A549 (cell line): ENCODE measurements at regions of chr2 and their contacts with region 1.

Region 1: GRCh38 chr2:44479122-44479887 is 117.6 kb downstream of the CAMKMT start:
- DNase-seq: peak; percentile 74 to 91
- ATAC-seq: peak; percentile 99 to 100
- H3K4me3 ChIP-seq: no peak overlapping the region
- H3K27ac ChIP-seq: no peak overlapping the region
- H3K4me1 ChIP-seq: no peaks in the 10 kb centered on the region
- CTCF ChIP-seq: peak; percentile 100
- EP300 ChIP-seq: no peak
- POLR2A ChIP-seq: no peak
- RAD21 ChIP-seq: peak; percentile 98

Region 2: DNA sequence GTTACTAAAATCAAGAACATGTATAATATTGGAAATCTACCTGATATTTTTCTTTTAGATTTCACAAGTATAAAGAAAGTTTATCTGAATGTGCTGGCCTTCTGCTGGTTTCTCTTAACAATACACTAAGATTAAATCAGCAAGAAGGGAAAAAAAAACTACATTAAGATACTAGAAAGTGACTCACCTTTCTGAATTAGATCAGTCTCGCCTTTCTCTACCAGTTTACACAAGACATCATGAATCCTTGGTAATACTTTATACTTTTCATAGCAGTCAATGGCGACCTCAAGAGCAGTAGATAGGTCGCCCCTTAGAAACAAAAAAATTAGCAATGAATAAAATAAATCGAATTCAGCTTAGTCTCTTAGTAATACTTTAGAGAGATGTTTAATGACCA is 544.7 kb before region 1 on chr2:
- CTCF ChIA-PET with region 1: no interaction called
- POLR2A ChIA-PET with region 1: no interaction called
- DNase-seq: no peak
- ATAC-seq: no peak
- H3K4me3 ChIP-seq: no peak overlapping the region
- H3K27ac ChIP-seq: no peak overlapping the region
- H3K4me1 ChIP-seq: peaks cover 9% of the 10 kb centered on the region
- CTCF ChIP-seq: no peak
- EP300 ChIP-seq: no peak
- POLR2A ChIP-seq: no peak
- RAD21 ChIP-seq: no peak

Region 3: DNA sequence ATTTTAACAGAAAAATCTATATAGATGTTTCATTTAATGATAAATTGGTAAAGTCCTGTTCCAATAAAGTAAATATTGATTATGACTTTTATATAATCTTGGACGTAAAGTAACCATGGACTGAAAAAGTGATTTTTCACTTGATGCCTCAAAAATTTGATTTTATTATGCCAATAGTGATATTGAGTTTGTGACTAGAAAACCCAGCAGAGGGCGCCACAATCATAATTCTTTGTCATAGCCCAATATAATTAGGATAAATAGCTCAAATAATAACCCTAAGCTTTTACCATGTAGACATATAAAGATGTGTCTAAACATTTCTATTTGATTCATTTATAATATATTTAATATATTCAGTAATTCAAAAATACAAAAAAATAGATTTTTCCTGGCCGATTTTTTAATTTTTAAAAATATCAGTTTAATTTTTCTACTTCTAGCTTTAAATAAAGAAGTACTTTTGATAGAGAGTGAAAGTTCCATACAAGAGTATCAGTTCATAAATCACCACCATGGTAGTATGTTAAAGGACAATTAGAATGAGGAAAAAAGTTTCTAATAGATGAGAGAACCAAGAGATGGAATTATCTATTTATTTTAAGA is 86.9 kb before region 1 on chr2:
- CTCF ChIA-PET with region 1: interaction called, 102 read pairs
- POLR2A ChIA-PET with region 1: no interaction called
- DNase-seq: peak; percentile 21 to 35
- ATAC-seq: no peak
- H3K4me3 ChIP-seq: no peak overlapping the region
- H3K27ac ChIP-seq: no peak overlapping the region
- H3K4me1 ChIP-seq: no peaks in the 10 kb centered on the region
- CTCF ChIP-seq: peak; percentile 95
- EP300 ChIP-seq: no peak
- POLR2A ChIP-seq: no peak
- RAD21 ChIP-seq: peak; percentile 75 to 82

Region 4: DNA sequence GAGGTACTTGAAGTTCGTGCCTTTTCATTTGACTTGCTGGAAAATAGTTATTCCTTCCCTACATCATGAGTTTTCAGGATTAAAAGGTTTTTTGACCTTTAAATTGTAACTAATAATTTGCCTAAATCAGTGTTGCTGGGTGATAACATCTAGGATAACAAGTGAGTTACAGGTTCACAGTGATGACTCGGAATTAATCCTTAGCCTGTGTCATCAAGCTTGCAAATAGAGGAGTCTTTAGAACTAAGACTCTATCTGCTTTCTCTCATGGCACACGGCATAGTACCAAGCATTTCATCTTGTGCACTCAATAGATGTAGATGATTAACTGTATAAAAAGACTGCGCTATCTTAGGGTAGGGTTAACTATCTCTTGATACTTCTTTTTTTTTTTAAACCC is 38.1 kb before region 1 on chr2:
- CTCF ChIA-PET with region 1: interaction called, 13 read pairs
- POLR2A ChIA-PET with region 1: no interaction called
- DNase-seq: peak in 1 of 2 experiments; percentile 24
- ATAC-seq: peak; percentile 56 to 63; a peak in 4 of 6 replicates
- H3K4me3 ChIP-seq: no peak overlapping the region
- H3K27ac ChIP-seq: no peak overlapping the region
- H3K4me1 ChIP-seq: 0 out of 3 replicates have a peak, but pooled peaks cover 4% of the 10 kb centered on the region
- CTCF ChIP-seq: no peak
- EP300 ChIP-seq: no peak
- POLR2A ChIP-seq: no peak
- RAD21 ChIP-seq: no peak

Region 5: GRCh38 chr2:44498551-44498950 is 19.2 kb after region 1 on chr2:
- CTCF ChIA-PET with region 1: interaction called, 57 read pairs
- POLR2A ChIA-PET with region 1: no interaction called
- DNase-seq: no peak
- ATAC-seq: no peak
- H3K4me3 ChIP-seq: no peak overlapping the region
- H3K27ac ChIP-seq: no peak overlapping the region
- H3K4me1 ChIP-seq: no peaks in the 10 kb centered on the region
- CTCF ChIP-seq: no peak
- EP300 ChIP-seq: no peak
- POLR2A ChIP-seq: no peak
- RAD21 ChIP-seq: no peak

Region 6: GRCh38 chr2:44715671-44716081 is 236.4 kb after region 1 on chr2:
- CTCF ChIA-PET with region 1: interaction called, 19 read pairs
- POLR2A ChIA-PET with region 1: no interaction called
- DNase-seq: peak; percentile 17 to 60
- ATAC-seq: peak; percentile 87 to 91
- H3K4me3 ChIP-seq: no peak overlapping the region
- H3K27ac ChIP-seq: no peak overlapping the region
- H3K4me1 ChIP-seq: no peaks in the 10 kb centered on the region
- CTCF ChIP-seq: peak; percentile 60
- EP300 ChIP-seq: no peak
- POLR2A ChIP-seq: no peak
- RAD21 ChIP-seq: peak; percentile 59 to 67

Region 7: GRCh38 chr2:44981136-44982108 is 502.1 kb after region 1 on chr2:
- CTCF ChIA-PET with region 1: interaction called, 10 read pairs
- POLR2A ChIA-PET with region 1: no interaction called
- DNase-seq: peak; percentile 81 to 83
- ATAC-seq: peak; percentile 84 to 97
- H3K4me3 ChIP-seq: no peak overlapping the region
- H3K27ac ChIP-seq: no peak overlapping the region
- H3K4me1 ChIP-seq: no peaks in the 10 kb centered on the region
- CTCF ChIP-seq: peak; percentile 97
- EP300 ChIP-seq: no peak
- POLR2A ChIP-seq: no peak
- RAD21 ChIP-seq: peak; percentile 97 to 99